CD14-positive monocyte (primary cell): ENCODE measurements at regions of chr11 and their contacts with region 1.

Region 1: DNA sequence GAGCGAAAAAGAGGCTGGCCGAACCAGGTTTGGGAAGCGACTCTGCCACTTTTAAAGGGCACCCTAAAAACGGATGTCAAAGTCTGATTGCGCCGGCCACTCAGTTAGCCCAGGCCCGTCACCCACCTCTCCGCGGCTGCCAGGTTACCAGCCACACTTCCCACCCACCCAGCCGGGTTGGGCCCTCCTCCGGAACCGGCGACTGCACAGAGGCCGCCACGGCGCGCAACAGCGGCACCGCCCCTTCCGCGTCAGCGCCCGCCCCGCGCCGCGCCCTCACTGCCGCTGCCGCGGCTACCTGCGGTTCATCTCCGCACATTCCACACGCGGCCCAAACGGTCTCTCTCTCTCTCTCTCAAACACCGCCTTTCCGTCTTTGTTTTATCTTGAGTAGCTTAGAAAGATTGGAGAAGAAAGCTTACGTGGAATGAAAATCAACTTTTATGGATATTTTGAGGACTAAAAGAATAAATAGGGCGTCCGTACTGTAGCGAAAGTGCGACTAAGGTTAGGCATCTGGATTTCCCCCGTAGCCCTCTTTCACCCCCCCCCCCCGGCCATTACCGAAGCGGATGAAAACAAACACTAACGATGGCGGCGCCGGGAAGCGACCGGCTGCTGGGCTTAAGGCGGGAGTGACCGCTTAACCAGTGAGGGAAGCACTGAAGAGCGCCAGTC is at the starts of genes ATG13 and HARBI1:
- DNase-seq: peak; percentile 87 to 88 (median 88)
- H3K4me3 ChIP-seq: peak within 1 kb of the TSS; percentile 75 to 96 (median 95)
- H3K4me3 Mint-ChIP-seq: peak within 1 kb of the TSS; percentile 93 to 99
- H3K27ac ChIP-seq: peak within 1 kb of the TSS; percentile 92 to 99
- H3K27ac Mint-ChIP-seq: peak within 1 kb of the TSS; percentile 98 to 100 (median 99)
- H3K4me1 ChIP-seq: peaks cover 17 to 25% of the 10 kb centered on the region in 2 donors
- H3K4me1 Mint-ChIP-seq: peaks cover 26% of the 10 kb centered on the region
- H3K27me3 ChIP-seq: no peaks in the 10 kb centered on the region
- H3K27me3 Mint-ChIP-seq: no peaks in the 10 kb centered on the region
- CTCF ChIP-seq: no peak
- polyA plus RNA-seq, gene ATG13: 33.7 to 55.5 (median 51.2) TPM
- polyA plus RNA-seq, gene HARBI1: 2.1 to 4.4 (median 2.1) TPM

Region 2: DNA sequence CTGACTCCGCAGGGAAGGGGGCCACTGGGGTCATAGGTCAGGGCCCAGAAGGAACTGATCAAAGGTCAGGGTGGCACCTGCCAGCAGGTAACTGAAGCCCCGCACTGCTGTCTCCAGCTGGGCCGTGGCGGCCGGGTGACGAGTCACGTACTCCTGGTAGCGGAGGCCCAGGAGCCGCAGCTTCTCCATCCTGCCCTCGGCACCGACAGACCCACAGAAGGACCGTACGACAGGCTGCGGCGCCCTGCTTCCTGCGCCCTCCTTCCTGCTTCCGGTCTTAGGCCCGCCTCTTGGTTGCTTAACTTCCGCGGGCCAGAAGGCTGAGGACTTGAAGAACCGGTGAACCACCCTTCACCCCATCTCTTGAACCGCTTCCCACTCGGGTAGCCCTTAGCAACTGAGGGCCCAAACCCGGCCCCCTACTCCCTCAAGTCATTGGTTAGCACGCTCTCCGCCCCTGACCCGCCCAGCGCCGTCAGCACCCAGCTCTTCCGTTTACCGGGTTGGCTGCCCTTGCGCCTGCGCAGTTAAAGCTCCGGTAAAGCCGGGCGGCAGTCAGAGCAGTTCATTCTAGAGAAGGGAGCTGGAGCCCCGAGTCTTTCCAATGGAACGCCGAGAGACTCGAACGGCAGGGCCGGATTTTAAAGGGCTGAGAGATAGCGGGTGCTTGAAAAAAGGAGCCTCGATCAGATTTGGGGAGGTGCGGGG is 699.4 kb before region 1 on chr11 and contains the start of gene PEX16:
- intact Hi-C with region 1: loop called in 1 of 2 experiments (anchors 10 kb)
- DNase-seq: peak; percentile 99
- H3K4me3 ChIP-seq: peak within 1 kb of the TSS; percentile 71 to 91 (median 82)
- H3K4me3 Mint-ChIP-seq: peak within 1 kb of the TSS; percentile 97 to 98
- H3K27ac ChIP-seq: peak within 1 kb of the TSS; percentile 93 to 96
- H3K27ac Mint-ChIP-seq: peak within 1 kb of the TSS; percentile 96 to 99 (median 98)
- H3K4me1 ChIP-seq: peaks cover 16 to 28% of the 10 kb centered on the region in 2 donors
- H3K4me1 Mint-ChIP-seq: peaks cover 29% of the 10 kb centered on the region
- H3K27me3 ChIP-seq: peaks cover 6 to 15% of the 10 kb centered on the region in 2 donors
- H3K27me3 Mint-ChIP-seq: peaks cover 7 to 17% (median 14%) of the 10 kb centered on the region in 3 donors
- CTCF ChIP-seq: no peak
- polyA plus RNA-seq, gene PEX16: 33.8 to 46.1 (median 35.1) TPM

Region 3: GRCh38 chr11:46389450-46390253 is 227.5 kb before region 1 on chr11:
- intact Hi-C with region 1: loop called in 1 of 2 experiments (anchors 10 kb)
- DNase-seq: peak; percentile 38 to 54 (median 46)
- H3K4me3 ChIP-seq: peak overlapping the region in 1 of 3 experiments; percentile 62
- H3K4me3 Mint-ChIP-seq: peak overlapping the region; percentile 47 to 86
- H3K27ac ChIP-seq: no peak overlapping the region
- H3K27ac Mint-ChIP-seq: no peak overlapping the region
- H3K4me1 ChIP-seq: peaks cover 31 to 56% of the 10 kb centered on the region in 2 donors
- H3K4me1 Mint-ChIP-seq: peaks cover 42% of the 10 kb centered on the region
- H3K27me3 ChIP-seq: peaks cover 42 to 63% of the 10 kb centered on the region in 2 donors
- H3K27me3 Mint-ChIP-seq: peaks cover 63 to 86% (median 73%) of the 10 kb centered on the region in 3 donors
- CTCF ChIP-seq: peak; percentile 89

Region 4: GRCh38 chr11:46700241-46701077 is 83.3 kb after region 1 on chr11 and contains the starts of genes ARHGAP1 and ZNF408:
- intact Hi-C with region 1: loop called in 1 of 2 experiments (anchors 5 kb)
- DNase-seq: peak; percentile 97 to 99 (median 99)
- H3K4me3 ChIP-seq: peak within 1 kb of the TSS; percentile 59 to 82 (median 68)
- H3K4me3 Mint-ChIP-seq: peak within 1 kb of the TSS; percentile 96 to 98
- H3K27ac ChIP-seq: peak within 1 kb of the TSS; percentile 64 to 84
- H3K27ac Mint-ChIP-seq: peak within 1 kb of the TSS; percentile 91 to 99 (median 98)
- H3K4me1 ChIP-seq: peaks cover 23 to 46% of the 10 kb centered on the region in 2 donors
- H3K4me1 Mint-ChIP-seq: peaks cover 40% of the 10 kb centered on the region
- H3K27me3 ChIP-seq: no peaks in the 10 kb centered on the region
- H3K27me3 Mint-ChIP-seq: peaks cover 0 to 3% (median 0%) of the 10 kb centered on the region in 3 donors
- CTCF ChIP-seq: no peak
- polyA plus RNA-seq, gene ARHGAP1: 31.6 to 59.3 (median 44.1) TPM
- polyA plus RNA-seq, gene ZNF408: 4.1 to 4.5 (median 4.2) TPM

Region 5: GRCh38 chr11:47176328-47177228 is 559.4 kb after region 1 on chr11 and contains the start of gene ARFGAP2:
- intact Hi-C with region 1: loop called in 1 of 2 experiments (anchors 5 kb)
- DNase-seq: peak; percentile 93 to 96 (median 94)
- H3K4me3 ChIP-seq: peak within 1 kb of the TSS; percentile 77 to 94 (median 93)
- H3K4me3 Mint-ChIP-seq: peak within 1 kb of the TSS; percentile 95 to 98
- H3K27ac ChIP-seq: peak within 1 kb of the TSS; percentile 90 to 95
- H3K27ac Mint-ChIP-seq: peak within 1 kb of the TSS; percentile 96 to 99 (median 98)
- H3K4me1 ChIP-seq: peaks cover 24 to 29% of the 10 kb centered on the region in 2 donors
- H3K4me1 Mint-ChIP-seq: peaks cover 22% of the 10 kb centered on the region
- H3K27me3 ChIP-seq: no peaks in the 10 kb centered on the region
- H3K27me3 Mint-ChIP-seq: peaks cover 0 to 2% (median 1%) of the 10 kb centered on the region in 3 donors
- CTCF ChIP-seq: no peak
- polyA plus RNA-seq, gene ARFGAP2: 59.7 to 129 (median 61.0) TPM